Ascending aorta (tissue), 2 donors: ENCODE measurements at regions of chr6 and their contacts with region 1.

Region 1: DNA sequence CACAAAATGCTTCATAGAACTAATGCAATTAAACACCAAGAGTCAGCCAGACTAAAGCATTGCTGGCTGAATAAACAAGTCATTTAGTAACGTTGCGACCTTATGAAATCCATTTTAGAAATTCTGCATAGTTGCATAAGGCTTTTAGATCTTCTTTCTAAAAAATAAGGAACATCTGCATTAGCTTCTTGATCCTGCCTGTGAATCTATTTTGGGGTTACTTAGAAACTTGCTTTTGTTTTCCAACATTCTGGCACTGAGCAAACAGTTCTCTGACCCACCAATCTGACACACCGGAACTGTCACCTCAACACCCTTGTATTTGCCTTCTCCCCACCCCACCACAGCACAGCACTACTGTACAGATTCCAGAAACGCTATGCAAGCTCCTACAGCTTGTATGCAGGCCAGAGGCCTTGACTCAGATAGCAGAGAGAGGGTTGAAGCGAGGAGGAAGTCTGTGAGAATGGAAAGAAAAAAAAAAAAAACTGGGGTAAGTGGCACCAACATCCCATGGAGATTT is 55.0 kb downstream of the KIF13A start:
- DNase-seq: peak in 1 of 2 donors; percentile 86
- H3K4me3 ChIP-seq: peak overlapping the region in 1 of 2 donors; percentile 29
- H3K27ac ChIP-seq: peak overlapping the region; percentile 76 to 79
- H3K4me1 ChIP-seq: peaks cover 15 to 80% of the 10 kb centered on the region in 2 donors
- H3K27me3 ChIP-seq: no peaks in the 10 kb centered on the region
- CTCF ChIP-seq: no peak

Region 2: GRCh38 chr6:17945111-17945510 is 12.7 kb after region 1 on chr6:
- intact Hi-C with region 1: loop called (anchors 2 kb)
- DNase-seq: no peak
- H3K4me3 ChIP-seq: no peak overlapping the region
- H3K27ac ChIP-seq: peak overlapping the region in 1 of 2 donors; percentile 12
- H3K4me1 ChIP-seq: peaks cover 0 to 28% of the 10 kb centered on the region in 2 donors
- H3K27me3 ChIP-seq: no peaks in the 10 kb centered on the region
- CTCF ChIP-seq: no peak

Region 3: DNA sequence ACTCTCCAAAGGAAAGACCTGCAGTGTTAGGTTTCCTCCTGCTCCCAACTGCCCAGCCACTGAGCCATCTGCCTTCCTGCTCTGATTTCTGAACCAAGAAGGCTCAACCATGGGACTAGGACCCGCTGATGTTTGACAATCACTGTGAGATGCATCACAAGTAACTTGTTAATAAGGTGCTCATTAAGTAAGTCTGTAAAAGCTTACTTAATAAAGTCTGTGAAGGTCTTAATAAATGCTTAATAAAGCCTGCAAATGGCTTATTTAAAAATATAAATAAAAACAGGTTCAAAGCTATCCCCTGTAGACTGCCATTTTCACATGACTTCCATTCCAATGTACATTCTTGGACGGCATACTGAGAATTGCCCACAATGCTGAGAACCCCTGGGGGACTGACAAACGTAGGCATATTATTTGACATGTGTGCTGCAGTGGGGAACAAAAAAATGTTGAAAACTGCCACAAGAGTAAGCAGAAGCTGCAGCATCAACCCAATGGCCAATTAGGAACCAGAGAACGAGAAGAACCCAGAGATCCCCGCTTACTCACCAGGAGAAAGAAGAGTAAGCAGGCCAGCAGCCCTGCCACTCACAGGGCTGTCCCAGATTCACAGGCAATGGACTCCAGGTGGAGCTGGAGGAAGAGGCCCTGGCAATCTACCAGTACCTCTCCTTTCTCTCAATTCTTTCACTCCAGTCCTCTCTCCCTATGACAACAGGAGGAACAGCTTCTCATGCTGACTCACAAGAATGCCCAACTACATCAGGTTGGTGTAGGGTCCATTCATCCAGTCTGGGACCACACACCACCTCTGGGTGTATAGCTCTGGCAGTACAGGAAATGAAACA is 35.5 kb after region 1 on chr6:
- intact Hi-C with region 1: loop called (anchors 5 kb)
- DNase-seq: no peak
- H3K4me3 ChIP-seq: no peak overlapping the region
- H3K27ac ChIP-seq: peak overlapping the region; percentile 84 to 89
- H3K4me1 ChIP-seq: peaks cover 17 to 67% of the 10 kb centered on the region in 2 donors
- H3K27me3 ChIP-seq: no peaks in the 10 kb centered on the region
- CTCF ChIP-seq: no peak

Region 4: DNA sequence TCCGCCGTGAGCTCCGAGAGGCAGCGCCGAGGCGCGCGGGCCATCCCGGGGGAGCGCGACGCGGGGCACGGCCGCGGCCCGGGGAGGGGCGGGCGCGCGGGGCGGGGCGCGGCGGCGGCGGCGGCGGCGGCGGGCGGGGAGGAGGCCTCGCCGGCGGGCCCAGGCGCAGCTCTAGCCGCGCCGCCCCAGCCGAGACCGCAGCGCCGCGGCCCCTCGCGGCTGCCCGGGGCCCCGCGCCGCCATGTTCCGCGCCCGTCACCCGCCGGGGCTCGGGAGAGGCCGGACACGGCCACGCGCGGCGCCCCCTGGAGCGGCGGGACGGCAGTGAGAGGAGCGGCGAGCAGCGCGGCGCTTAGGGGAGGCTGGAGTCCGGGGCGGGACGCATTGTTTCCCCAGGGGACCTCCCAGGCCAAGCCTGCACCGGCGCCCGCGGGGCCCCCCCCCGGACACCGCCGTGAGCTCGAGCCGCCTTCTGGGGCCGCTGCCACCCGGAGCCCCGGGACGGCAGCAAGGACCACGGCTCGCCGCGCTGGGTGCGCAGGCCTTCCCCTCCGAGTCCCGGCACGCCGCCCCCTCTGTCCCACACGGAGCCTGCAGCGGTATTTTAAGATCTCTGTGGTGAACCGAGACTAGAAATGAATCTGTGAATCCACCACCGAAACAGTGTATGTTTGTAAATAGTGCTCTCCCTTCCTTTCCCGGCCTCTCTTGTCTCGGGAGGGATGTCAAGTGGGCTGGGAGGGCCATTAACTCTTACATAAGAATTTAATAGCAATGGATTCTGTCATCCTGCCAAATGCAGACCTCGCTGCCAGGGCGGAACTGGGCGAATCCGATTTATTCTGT is 55.4 kb after region 1 on chr6 and contains the start of gene KIF13A:
- intact Hi-C with region 1: loop called (anchors 5 kb)
- DNase-seq: peak in 1 of 2 donors; percentile 86
- H3K4me3 ChIP-seq: peak within 1 kb of the TSS; percentile 81 to 84
- H3K27ac ChIP-seq: peak within 1 kb of the TSS; percentile 92 to 93
- H3K4me1 ChIP-seq: peaks cover 0 to 18% of the 10 kb centered on the region in 2 donors
- H3K27me3 ChIP-seq: no peaks in the 10 kb centered on the region
- CTCF ChIP-seq: peak in 2 of 3 experiments; percentile 20 to 42
- total RNA-seq, gene KIF13A: 28.9 TPM

Region 5: DNA sequence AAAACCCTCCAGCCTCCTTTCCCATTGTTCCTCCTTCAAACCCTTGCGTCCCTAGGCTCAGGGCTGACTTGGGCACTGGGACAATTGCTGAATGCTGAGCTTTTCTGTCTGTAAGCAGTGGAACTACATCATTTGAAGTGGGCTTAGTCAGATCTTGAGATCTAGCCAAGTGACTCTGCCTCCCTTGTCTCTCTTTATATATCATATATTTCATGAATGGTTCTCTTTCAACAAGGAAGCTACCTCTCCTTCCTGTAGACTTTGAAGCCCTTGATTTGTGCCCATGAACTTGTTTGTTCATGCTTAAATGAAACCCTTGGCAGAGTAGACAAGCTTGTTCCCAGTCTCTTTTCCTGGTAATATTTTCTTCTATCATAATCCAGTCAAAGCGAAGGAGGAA is 115.0 kb after region 1 on chr6:
- intact Hi-C with region 1: loop called (anchors 5 kb)
- DNase-seq: peak in 1 of 2 donors; percentile 58
- H3K4me3 ChIP-seq: no peak overlapping the region
- H3K27ac ChIP-seq: peak overlapping the region; percentile 61 to 77
- H3K4me1 ChIP-seq: peaks cover 10 to 22% of the 10 kb centered on the region in 2 donors
- H3K27me3 ChIP-seq: no peaks in the 10 kb centered on the region
- CTCF ChIP-seq: no peak

Region 6: DNA sequence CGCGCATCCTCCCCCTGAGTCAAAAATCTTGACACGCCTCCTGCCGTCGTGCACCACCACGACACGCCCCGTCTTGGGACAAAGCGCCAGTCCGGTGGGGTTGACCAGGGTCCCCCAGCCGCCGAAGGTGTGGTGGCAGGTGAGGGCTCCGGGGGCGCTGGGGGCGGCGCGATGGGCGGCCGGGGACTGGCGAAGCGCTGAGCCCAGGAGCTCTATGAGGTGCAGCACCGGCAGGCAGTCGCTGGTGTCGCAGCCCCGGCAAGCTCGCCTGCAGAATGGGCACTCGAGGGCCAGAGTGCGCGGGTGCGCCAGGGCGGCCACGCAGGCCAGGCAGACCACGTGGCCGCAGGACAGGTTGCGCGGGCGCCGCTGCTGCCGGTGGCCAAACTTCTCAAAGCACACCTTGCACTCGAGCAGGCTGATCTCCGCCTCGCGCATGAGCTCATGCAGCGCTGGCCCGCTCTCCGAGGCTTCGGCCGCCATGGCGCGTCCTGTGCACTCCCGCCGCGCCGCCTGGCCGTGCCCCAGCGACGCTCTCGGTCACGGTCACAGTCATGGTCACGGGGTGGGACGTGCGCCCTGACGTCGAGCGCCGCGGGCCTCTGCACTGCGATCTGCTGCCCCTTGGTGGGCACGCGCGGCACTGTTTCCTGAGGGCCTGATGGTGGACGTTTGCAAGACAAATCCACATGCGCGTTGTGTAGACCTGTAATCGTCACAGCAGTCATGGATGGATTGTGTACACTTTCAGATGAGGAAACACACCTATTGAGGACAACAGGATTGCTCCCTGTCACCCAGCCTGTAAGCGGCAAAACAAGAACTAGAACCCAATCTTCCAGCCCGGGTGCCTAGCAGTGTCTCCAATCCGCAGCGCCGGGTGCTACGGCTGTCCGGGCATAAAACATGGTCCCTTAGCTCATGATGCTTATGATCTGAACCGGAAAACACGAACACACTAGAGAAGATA is 190.0 kb after region 1 on chr6 and contains the start of gene NHLRC1:
- intact Hi-C with region 1: loop called (anchors 5 kb)
- DNase-seq: peak; percentile 68 to 95
- H3K4me3 ChIP-seq: peak within 1 kb of the TSS; percentile 66 to 77
- H3K27ac ChIP-seq: peak within 1 kb of the TSS; percentile 15 to 63
- H3K4me1 ChIP-seq: peaks cover 0 to 10% of the 10 kb centered on the region in 2 donors
- H3K27me3 ChIP-seq: no peaks in the 10 kb centered on the region
- CTCF ChIP-seq: peak; percentile 90 to 98 (median 96)
- total RNA-seq, gene NHLRC1: 0.32 TPM

Region 7: DNA sequence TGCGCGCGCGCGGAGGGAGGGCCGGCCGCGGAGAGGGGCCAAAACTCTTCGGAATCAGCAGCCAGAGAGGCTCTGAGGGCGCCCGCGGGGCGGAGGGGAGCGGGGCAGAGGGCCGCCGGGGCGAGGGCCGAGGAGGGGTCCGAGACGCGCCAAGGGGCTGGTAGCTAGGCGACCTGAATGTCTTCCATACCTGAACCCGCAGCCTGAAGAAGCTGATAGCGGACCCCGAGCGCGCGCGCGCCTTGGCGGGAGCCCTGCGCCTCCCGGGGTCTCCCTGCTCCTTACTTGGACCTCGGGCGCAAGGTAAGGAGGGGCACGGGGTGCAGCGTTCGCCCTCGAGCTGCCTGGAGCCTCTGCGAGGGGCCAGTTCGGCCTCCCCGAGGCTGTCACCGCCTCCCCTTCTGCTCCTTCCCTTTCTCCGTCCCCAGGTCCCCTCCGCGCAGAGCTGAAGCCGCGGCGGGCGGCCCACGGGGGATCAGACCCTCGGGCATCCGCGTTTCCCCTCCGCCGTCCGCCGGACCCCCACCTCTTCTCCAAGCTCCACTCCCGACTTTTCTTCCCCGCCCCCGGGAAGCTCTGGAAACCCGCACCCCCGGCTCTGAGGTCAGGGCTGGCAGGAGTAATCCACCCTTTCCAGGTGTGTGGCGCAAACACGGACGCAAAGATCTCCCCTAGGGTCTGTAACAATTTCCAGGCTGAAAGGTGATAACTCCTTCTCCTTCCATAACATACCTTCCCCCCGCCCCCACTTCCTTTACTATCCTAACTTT is 345.0 kb after region 1 on chr6:
- intact Hi-C with region 1: no loop called
- DNase-seq: no peak
- H3K4me3 ChIP-seq: peak overlapping the region; percentile 41 to 60
- H3K27ac ChIP-seq: no peak overlapping the region
- H3K4me1 ChIP-seq: peaks cover 0 to 5% of the 10 kb centered on the region in 2 donors
- H3K27me3 ChIP-seq: peaks cover 6% of the 10 kb centered on the region
- CTCF ChIP-seq: no peak